HepG2 (cell line): ENCODE measurements at regions of chr22 and their contacts with region 1.

Region 1: DNA sequence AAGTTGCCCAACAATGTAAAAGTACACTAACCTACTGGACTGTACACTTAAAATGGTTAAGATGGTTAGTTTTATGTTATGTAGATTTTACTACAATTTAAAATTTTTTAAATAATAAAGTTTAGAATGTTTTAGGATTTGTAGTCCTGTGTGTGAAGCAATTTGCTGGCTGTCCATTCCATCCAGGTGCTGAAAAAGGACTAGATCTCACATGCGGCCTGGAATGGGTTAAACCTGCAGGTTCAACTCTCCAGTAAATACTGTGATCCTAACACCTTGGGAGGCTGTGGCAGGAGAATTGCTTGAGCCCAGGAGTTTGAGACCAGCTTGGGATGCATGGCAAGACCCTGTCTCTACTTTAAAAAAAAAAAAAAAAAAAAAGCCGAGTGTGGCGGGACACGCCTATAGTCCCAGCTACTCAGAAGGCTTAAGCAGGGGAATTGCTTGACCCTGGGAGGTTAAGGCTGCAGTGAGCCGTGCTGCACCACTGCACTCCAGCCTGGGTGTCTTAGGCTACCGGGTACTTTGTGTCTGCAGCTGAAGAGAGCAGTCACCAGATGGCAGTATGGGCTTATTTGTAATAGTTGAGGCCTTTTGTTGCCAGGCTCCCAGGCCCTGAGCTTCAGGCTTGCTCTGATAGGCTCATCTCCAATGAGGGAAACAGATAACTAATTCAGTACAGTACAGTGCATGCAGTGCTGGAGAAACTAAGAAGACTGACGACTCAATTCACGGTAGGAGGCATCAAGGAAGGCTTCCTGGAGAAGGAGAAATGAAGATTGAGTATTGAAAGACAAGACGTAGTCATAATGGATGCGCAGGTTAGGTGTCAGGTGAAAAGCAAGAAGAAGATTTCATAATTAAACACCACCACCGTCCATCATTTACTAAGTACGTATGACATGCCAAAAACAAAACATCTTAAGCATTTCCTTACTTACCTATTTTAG is 64.7 kb upstream of the ASPHD2 start:
- DNase-seq: peak; percentile 72
- ATAC-seq: peak; percentile 94
- H3K4me3 ChIP-seq: no peak overlapping the region
- H3K27ac ChIP-seq: no peak overlapping the region
- H3K4me1 ChIP-seq: peaks cover 9% of the 10 kb centered on the region
- H3K27me3 ChIP-seq: peaks cover 0 to 6% of the 10 kb centered on the region in 2 experiments; a peak in 1 of 5 replicates
- CTCF ChIP-seq: peak; percentile 85
- EP300 ChIP-seq: no peak
- POLR2A ChIP-seq: no peak
- RAD21 ChIP-seq: peak; percentile 66; the same call in 1 of the 2 replicates

Region 2: DNA sequence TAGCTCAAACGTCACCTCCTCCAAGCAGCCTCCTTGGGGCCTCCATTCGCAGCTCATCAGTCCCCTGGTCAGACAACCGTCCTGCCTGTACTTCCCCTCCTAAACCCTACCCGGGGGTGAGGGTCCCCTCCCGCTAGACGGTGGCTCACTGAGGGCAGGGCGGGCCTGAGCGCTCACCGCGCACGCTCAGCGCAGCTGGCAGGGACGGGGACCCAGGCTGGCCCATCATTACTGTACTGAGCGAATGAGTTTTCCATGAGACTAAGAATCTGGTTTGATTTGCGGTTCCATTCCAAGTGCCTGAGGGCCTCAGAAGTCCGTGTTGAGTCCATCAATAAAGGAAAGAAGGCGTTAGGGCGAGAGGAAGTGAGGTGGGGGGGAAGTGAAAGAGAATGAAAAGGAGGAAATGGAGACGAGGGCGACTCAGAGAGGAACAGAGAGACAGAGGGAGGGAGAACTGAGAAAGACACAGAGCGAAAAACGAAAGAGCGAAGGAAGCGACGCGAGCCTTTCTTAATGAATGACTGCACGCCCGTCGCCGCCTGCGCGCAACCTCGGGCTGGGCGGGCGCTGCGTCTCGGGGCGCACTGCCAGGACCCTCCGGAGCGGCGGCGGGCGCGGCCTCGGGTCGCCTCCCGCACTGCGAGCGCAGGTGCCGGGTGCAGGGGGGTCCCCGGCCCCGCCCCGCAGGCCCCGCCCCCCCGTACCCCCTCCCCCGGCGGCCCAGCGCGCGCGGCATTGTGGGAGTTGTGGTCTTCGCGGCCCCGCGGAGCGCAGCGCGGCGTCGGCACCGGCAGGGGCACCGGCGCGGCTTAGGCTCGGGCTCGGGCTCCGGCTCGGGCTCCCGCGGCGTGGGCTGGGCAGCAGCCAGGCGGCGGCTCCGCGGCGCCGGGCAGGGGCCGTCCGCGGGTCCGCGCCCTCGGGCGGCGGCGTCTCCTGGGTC is 64.4 kb after region 1 on chr22 and contains the start of gene ASPHD2:
- CTCF ChIA-PET with region 1: no interaction called
- POLR2A ChIA-PET with region 1: no interaction called
- in situ Hi-C with region 1: no loop called
- intact Hi-C with region 1: loop called (anchors 2 kb)
- DNase-seq: no peak
- ATAC-seq: peak; percentile 79
- H3K4me3 ChIP-seq: peak within 1 kb of the TSS; percentile 51 to 67 (median 65)
- H3K27ac ChIP-seq: no peak within 1 kb of the TSS
- H3K4me1 ChIP-seq: peaks cover 5% of the 10 kb centered on the region; the same call in 1 of the 2 replicates
- H3K27me3 ChIP-seq: peaks cover 10 to 42% of the 10 kb centered on the region in 2 experiments
- CTCF ChIP-seq: no peak
- EP300 ChIP-seq: no peak
- POLR2A ChIP-seq: no peak
- RAD21 ChIP-seq: no peak
- total RNA-seq, gene ASPHD2: 0.04 TPM in 1 of 2 replicates, not detected in the other

Region 3: DNA sequence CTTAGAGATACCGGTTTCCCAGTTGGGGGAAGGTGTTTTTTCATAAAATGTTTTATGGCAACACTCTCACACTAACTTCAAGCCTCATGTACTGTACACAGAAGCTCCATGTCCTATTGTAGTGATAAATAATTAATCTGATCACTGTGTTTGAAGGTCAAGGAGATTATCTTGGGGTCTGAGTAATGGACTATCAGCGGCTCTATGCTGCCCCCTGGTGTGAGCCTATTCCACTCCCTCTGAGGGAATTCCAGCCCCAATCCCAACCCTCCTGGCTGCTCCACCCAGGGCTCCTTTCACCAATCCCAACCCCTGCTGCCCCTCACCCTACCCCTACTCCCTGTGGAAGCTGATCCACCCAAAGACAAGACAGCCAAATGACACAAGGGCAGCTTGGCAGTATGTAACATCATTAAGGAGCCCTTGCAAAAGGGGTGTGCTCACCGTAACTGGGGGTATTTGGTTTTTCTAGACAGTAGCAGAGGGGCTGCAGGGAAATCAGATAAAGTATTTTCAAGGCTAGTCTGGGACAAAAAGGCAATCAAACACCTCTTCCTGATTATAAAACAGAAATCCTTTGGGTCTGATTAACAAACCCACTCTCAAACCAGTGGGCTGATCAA is 97.0 kb after region 1 on chr22:
- CTCF ChIA-PET with region 1: interaction called, 16 read pairs
- POLR2A ChIA-PET with region 1: no interaction called
- in situ Hi-C with region 1: loop called (anchors 5 kb)
- intact Hi-C with region 1: loop called (anchors 1 kb)
- DNase-seq: peak; percentile 24
- ATAC-seq: peak; percentile 89
- H3K4me3 ChIP-seq: no peak overlapping the region
- H3K27ac ChIP-seq: no peak overlapping the region
- H3K4me1 ChIP-seq: peaks cover 16% of the 10 kb centered on the region
- H3K27me3 ChIP-seq: no peaks in the 10 kb centered on the region
- CTCF ChIP-seq: peak; percentile 73
- EP300 ChIP-seq: no peak
- POLR2A ChIP-seq: no peak
- RAD21 ChIP-seq: 0 out of 2 replicates have a peak, but pooled peaks have one; percentile 15

Region 4: DNA sequence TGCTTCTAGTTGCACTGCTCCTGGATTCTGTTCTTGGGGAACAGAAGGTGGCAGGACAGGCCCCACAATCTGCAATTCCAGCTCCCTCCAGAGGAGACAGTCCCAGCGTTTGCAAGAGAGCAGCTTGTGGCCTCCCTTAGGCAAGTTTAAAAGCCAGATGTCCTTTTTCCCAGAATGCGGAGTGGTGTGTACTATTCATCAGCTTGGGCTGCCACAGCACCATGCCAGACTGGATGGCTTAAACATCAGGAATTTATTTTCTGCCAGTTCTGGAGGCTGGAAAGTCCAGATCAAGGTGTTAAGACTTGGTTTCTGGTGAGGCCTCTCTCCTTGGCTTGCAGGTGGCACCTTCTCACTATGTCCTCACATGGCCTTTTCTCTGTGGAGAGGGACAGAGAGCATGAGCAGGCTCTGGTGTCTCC is 304.7 kb after region 1 on chr22:
- CTCF ChIA-PET with region 1: interaction called, 4 read pairs
- POLR2A ChIA-PET with region 1: no interaction called
- in situ Hi-C with region 1: no loop called
- intact Hi-C with region 1: loop called (anchors 5 kb)
- DNase-seq: peak; percentile 32
- ATAC-seq: peak; percentile 80
- H3K4me3 ChIP-seq: no peak overlapping the region
- H3K27ac ChIP-seq: no peak overlapping the region
- H3K4me1 ChIP-seq: peaks cover 14% of the 10 kb centered on the region
- H3K27me3 ChIP-seq: peaks cover 0 to 8% of the 10 kb centered on the region in 2 experiments; a peak in 1 of 5 replicates
- CTCF ChIP-seq: no peak
- EP300 ChIP-seq: no peak
- POLR2A ChIP-seq: no peak
- RAD21 ChIP-seq: no peak